Ovary (tissue), 10 donors: ENCODE measurements at regions of chr3 and their contacts with region 1.

Region 1: DNA sequence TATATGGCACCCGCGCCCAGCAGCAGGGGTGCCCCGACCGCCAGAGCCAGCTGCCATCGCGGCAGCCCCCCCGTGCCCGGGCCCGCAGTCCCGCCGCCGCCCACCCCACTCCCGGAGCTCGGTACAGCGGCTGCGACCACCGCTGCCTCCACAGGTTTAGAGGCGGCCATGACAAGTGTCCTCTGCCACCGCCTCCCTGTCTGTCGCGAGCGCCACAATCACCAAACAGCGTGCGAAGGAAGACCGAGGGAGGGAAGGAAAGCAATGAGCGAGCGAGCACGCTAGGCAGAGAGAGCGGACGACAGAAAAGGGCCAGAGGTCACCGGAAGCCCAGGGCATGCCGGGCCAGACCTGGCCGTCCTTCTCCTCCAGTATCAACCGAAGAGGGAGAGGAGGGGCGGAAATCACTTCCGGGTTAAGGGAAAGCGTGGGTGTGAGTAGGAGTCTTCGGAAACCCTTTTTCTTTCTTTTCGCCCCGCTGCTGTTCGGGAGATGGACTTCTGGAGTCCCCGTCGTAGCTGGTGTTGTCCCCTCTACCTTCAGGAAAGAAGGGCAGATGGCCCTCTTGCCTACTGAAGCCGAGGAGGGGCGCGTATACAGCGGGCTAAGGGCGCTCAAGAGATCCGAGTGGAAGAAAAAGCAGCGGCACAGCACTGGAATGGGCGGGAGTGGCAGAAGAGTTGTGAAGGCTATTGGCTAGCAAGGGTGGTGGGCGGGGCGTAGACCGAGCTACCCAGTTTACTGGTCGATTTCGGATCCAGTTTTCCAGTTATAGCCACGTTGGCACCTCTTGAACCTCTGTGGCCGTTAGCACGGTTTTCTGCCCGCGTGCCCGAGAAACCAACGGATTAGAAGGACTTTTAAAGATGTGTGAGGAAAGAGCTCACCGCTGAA is at the starts of genes LNP1 and TOMM70:
- DNase-seq: peak; percentile 96 to 98 (median 97)
- H3K4me3 ChIP-seq: peak within 1 kb of the TSS; percentile 91
- H3K27ac ChIP-seq: peak within 1 kb of the TSS; percentile 33 to 89
- H3K4me1 ChIP-seq: peaks cover 13% of the 10 kb centered on the region
- H3K27me3 ChIP-seq: no peaks in the 10 kb centered on the region
- CTCF ChIP-seq: no peak
- EP300 ChIP-seq: no peak
- POLR2A ChIP-seq: peak; percentile 66
- total RNA-seq, gene LNP1: 2.6 to 5.3 (median 4.4) TPM
- total RNA-seq, gene TOMM70: 29.9 to 46.6 (median 37.3) TPM

Region 2: GRCh38 chr3:98563661-98564281 is 1837.3 kb before region 1 on chr3:
- intact Hi-C with region 1: no loop called
- DNase-seq: no peak
- H3K4me3 ChIP-seq: no peak overlapping the region
- H3K27ac ChIP-seq: no peak overlapping the region
- H3K4me1 ChIP-seq: no peaks in the 10 kb centered on the region
- H3K27me3 ChIP-seq: no peaks in the 10 kb centered on the region
- CTCF ChIP-seq: no peak
- EP300 ChIP-seq: no peak
- POLR2A ChIP-seq: no peak

Region 3: DNA sequence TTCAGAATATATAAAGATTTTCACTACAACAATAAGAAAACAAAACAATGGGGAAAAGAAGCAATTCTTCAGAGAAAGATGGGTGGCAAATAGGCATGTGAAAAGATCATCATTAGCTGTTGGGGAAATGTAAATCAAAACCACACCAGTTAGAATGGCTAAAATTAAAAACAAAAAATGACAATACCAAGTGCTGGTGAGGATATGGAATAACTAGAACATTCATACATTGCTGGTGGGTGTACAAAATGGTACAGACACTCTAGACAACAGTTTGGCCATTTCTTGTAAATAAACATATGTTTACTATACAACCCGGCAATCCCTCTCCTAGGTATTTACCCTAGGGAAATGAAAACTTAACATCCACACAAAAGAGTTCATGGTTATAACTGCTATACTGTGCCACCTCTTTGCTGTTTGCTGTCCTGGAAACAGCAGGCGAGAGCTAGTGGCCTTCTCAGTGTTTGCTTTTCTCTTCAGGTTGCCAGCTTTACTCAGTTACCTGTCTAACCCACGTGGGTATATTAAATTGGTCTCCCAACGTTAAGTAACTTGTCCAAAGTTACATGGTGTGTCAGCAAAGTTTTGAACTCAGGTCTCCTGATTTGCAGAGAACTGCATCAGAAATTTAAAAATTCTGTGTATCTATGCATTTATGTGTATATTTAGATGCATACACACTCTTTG is 71.1 kb before region 1 on chr3:
- intact Hi-C with region 1: loop called in 1 of 4 experiments (anchors 10 kb)
- DNase-seq: no peak
- H3K4me3 ChIP-seq: no peak overlapping the region
- H3K27ac ChIP-seq: no peak overlapping the region
- H3K4me1 ChIP-seq: peaks cover 2% of the 10 kb centered on the region
- H3K27me3 ChIP-seq: no peaks in the 10 kb centered on the region
- CTCF ChIP-seq: no peak
- EP300 ChIP-seq: no peak
- POLR2A ChIP-seq: no peak

Region 4: DNA sequence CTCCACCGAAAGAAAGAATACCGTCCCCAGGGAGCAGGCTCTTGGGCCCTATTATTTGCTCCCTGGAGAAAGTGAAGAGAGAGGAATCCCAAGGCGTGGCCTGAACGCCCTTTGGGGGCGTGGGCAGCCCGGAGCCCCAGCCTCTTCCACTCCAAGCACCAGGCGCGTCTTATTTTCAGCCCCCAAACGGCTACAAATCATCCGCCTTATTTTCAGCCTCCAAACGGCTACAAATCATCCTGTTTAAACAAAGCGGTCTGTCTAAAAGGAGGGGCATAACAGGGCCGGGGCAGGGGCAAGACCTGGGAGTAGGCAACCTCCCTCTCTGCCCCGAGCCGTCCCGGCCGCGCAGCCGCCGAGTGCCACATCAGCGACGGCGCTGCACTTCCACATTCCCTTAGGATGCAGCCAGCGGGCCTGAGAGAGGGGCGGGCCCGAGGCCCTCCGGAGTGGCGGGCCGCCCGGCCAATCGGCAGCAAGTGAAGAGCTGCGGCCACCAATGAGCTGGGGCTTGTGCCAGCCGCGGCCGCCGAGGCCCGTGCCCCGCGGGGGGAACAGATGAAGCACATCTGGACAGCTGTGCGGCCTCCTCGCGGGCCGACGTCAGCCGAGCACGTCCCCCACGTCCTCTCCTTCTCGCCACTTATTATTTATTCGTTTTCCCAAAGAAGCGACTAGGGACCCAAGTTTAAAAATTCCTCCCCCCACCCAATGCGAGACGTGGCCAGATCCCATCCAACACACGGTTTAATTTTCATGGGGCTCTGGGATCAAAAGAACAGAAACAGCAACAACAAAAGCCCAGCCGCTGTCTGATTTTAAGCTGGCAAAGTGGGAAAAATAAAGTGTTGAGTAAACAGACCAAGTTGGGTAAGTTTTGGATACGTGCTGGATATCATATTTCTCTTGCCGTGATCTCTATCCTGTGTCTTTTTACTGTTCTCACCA is 91.3 kb after region 1 on chr3 and contains the start of gene TMEM45A:
- intact Hi-C with region 1: loop called in 1 of 4 experiments (anchors 10 kb)
- DNase-seq: peak; percentile 95 to 98 (median 97)
- H3K4me3 ChIP-seq: peak within 1 kb of the TSS; percentile 42
- H3K27ac ChIP-seq: peak within 1 kb of the TSS; percentile 54 to 66
- H3K4me1 ChIP-seq: no peaks in the 10 kb centered on the region
- H3K27me3 ChIP-seq: no peaks in the 10 kb centered on the region
- CTCF ChIP-seq: no peak
- EP300 ChIP-seq: no peak
- POLR2A ChIP-seq: peak; percentile 15
- total RNA-seq, gene TMEM45A: 6.1 to 21.5 (median 9.0) TPM

Region 5: GRCh38 chr3:101036213-101036618 is 635.2 kb after region 1 on chr3:
- intact Hi-C with region 1: loop called in 1 of 4 experiments (anchors 10 kb)
- DNase-seq: no peak
- H3K4me3 ChIP-seq: no peak overlapping the region
- H3K27ac ChIP-seq: no peak overlapping the region
- H3K4me1 ChIP-seq: no peaks in the 10 kb centered on the region
- H3K27me3 ChIP-seq: no peaks in the 10 kb centered on the region
- CTCF ChIP-seq: no peak
- EP300 ChIP-seq: no peak
- POLR2A ChIP-seq: no peak